CD4-positive, alpha-beta T cell (primary cell): ENCODE measurements at regions of chr18 and their contacts with region 1.

Region 1: GRCh38 chr18:2540575-2540974 is 30.7 kb downstream of the METTL4 start:
- DNase-seq: no peak
- ATAC-seq: no peak
- H3K4me3 ChIP-seq: no peak overlapping the region
- H3K4me3 Mint-ChIP-seq: no peak overlapping the region
- H3K27ac ChIP-seq: no peak overlapping the region
- H3K27ac Mint-ChIP-seq: no peak overlapping the region
- H3K4me1 ChIP-seq: no peaks in the 10 kb centered on the region
- H3K4me1 Mint-ChIP-seq: peaks cover 5% of the 10 kb centered on the region
- H3K27me3 ChIP-seq: no peaks in the 10 kb centered on the region
- H3K27me3 Mint-ChIP-seq: no peaks in the 10 kb centered on the region
- CTCF ChIP-seq: no peak

Region 2: GRCh38 chr18:1585879-1586488 is 954.6 kb before region 1 on chr18:
- CTCF ChIA-PET with region 1: no interaction called
- POLR2A ChIA-PET with region 1: no interaction called
- intact Hi-C with region 1: loop called in 1 of 2 experiments (anchors 5 kb)
- DNase-seq: peak in 3 of 14 experiments; percentile 14 to 24 (median 22)
- ATAC-seq: no peak
- H3K4me3 ChIP-seq: no peak overlapping the region
- H3K4me3 Mint-ChIP-seq: no peak overlapping the region
- H3K27ac ChIP-seq: no peak overlapping the region
- H3K27ac Mint-ChIP-seq: no peak overlapping the region
- H3K4me1 ChIP-seq: no peaks in the 10 kb centered on the region
- H3K4me1 Mint-ChIP-seq: no peaks in the 10 kb centered on the region
- H3K27me3 ChIP-seq: no peaks in the 10 kb centered on the region
- H3K27me3 Mint-ChIP-seq: peaks cover 28% of the 10 kb centered on the region
- CTCF ChIP-seq: peak; percentile 62

Region 3: DNA sequence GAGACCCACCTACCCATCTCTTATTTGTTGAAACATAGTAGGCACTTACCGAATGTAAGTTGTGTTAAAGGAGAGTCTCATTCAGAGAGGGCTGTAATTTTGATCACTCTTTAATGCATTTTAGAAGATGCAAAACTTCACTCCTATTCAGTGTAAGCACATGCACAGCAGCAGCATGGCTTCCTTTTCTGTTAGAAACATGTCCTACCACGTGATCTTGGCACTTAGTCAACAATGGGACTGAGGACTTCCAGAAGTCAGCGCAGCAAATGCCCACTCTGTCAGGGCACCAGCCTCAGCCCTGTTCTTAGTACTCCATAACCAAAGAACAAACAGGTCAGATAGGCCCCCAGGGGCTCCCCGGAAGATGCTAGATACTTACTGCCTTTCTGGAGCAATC is 425.8 kb before region 1 on chr18:
- CTCF ChIA-PET with region 1: no interaction called
- POLR2A ChIA-PET with region 1: no interaction called
- intact Hi-C with region 1: loop called (anchors 5 kb)
- DNase-seq: no peak
- ATAC-seq: no peak
- H3K4me3 ChIP-seq: no peak overlapping the region
- H3K4me3 Mint-ChIP-seq: no peak overlapping the region
- H3K27ac ChIP-seq: no peak overlapping the region
- H3K27ac Mint-ChIP-seq: no peak overlapping the region
- H3K4me1 ChIP-seq: no peaks in the 10 kb centered on the region
- H3K4me1 Mint-ChIP-seq: no peaks in the 10 kb centered on the region
- H3K27me3 ChIP-seq: peaks cover 0 to 12% of the 10 kb centered on the region in 2 experiments
- H3K27me3 Mint-ChIP-seq: peaks cover 35% of the 10 kb centered on the region
- CTCF ChIP-seq: no peak

Region 4: GRCh38 chr18:2337552-2338141 is 202.9 kb before region 1 on chr18:
- CTCF ChIA-PET with region 1: interaction called, 10 read pairs
- POLR2A ChIA-PET with region 1: interaction called, 3 read pairs
- intact Hi-C with region 1: loop called (anchors 1 to 2 kb)
- DNase-seq: peak in 12 of 14 experiments; percentile 14 to 63 (median 44)
- ATAC-seq: no peak
- H3K4me3 ChIP-seq: no peak overlapping the region
- H3K4me3 Mint-ChIP-seq: no peak overlapping the region
- H3K27ac ChIP-seq: no peak overlapping the region
- H3K27ac Mint-ChIP-seq: no peak overlapping the region
- H3K4me1 ChIP-seq: no peaks in the 10 kb centered on the region
- H3K4me1 Mint-ChIP-seq: no peaks in the 10 kb centered on the region
- H3K27me3 ChIP-seq: no peaks in the 10 kb centered on the region
- H3K27me3 Mint-ChIP-seq: peaks cover 39% of the 10 kb centered on the region
- CTCF ChIP-seq: peak; percentile 72